Activated CD4-positive, alpha-beta T cell treated with anti-CD3 and anti-CD28 coated beads for 36 hours (primary cell): ENCODE measurements at regions of chr5 and their contacts with region 1.

Region 1: DNA sequence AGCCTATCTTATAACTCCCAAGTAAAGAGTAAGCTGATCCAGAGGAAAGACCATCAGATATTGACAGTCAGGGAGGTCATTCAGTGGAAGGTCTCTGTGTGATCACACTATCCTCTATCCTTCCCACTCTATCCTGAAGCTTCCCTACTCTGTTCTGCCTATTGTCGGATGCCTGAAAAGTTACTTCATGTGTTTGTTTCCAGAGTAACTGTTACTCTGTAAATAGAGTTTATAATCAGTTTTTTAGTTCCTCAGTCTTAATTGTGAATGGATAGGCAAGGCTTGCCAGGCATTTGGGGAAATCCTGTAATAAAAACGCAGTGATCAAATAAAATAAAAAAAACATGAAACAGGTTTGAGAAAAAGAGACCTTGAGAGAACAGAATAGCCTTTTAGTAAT is 79.8 kb downstream of the XRCC4 start:
- DNase-seq: no peak
- ATAC-seq: no peak
- H3K4me3 Mint-ChIP-seq: no peak overlapping the region
- H3K27ac Mint-ChIP-seq: no peak overlapping the region
- H3K4me1 Mint-ChIP-seq: no peaks in the 10 kb centered on the region
- H3K27me3 Mint-ChIP-seq: no peaks in the 10 kb centered on the region

Region 2: GRCh38 chr5:81759632-81760005 is 1397.5 kb before region 1 on chr5:
- CTCF ChIA-PET with region 1: no interaction called
- POLR2A ChIA-PET with region 1: interaction called, 12 read pairs
- intact Hi-C with region 1: no loop called
- DNase-seq: no peak
- ATAC-seq: no peak
- H3K4me3 Mint-ChIP-seq: no peak overlapping the region
- H3K27ac Mint-ChIP-seq: no peak overlapping the region
- H3K4me1 Mint-ChIP-seq: peaks cover 24% of the 10 kb centered on the region
- H3K27me3 Mint-ChIP-seq: no peaks in the 10 kb centered on the region

Region 3: DNA sequence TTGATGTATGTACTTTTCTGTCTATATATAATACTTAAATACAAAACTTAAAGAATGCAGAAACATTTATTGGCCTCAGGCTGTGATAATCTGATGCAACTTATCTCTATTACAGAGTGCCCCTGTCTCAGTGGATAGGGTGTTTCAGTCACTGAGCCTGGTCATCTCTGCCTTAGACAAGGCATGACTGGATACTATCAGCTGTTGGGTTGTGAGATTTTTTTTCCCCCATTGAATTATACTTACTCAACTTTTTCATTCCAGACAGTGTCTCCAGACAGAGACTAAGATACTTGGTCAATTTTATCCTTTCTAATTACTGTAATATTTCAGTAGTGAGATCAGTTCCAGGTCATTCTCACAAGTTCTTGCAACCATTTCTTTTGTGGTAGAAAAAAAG is 53.1 kb before region 1 on chr5:
- CTCF ChIA-PET with region 1: no interaction called
- POLR2A ChIA-PET with region 1: no interaction called
- intact Hi-C with region 1: no loop called
- DNase-seq: no peak
- ATAC-seq: no peak
- H3K4me3 Mint-ChIP-seq: no peak overlapping the region
- H3K27ac Mint-ChIP-seq: no peak overlapping the region
- H3K4me1 Mint-ChIP-seq: no peaks in the 10 kb centered on the region
- H3K27me3 Mint-ChIP-seq: no peaks in the 10 kb centered on the region